Mucosa of descending colon (tissue), 3 donors: ENCODE measurements at regions of chr20 and their contacts with region 1.

Region 1: DNA sequence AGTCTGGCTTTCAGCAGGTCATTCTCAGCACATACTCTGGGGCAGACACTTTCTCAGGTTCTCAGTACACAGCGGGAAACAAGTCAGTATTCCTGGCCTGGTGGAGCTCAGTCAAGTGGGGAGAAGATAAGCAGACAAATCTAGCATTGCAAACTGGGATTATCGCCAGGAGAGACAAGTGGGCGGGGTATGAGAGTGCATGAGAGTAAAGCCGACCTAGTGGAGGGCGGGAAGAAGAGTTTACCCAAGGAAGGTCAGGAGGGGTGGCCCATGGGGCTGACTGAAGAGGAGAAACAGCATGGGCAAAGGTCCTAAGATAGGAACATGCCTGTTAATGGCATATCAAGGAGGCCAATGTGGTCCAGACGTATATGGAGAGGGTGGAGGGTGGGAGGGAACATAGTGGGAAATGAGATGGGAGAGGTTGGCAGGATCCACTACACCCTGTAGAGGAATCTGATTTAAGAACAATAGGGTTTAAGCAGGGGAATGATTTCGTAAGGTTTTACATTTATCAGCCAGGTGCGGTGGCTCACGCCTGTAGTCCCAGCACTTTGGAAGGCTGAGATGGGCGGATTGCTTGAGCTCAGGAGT is 12.4 kb upstream of the CSNK2A1 start:
- DNase-seq: peak in 1 of 3 donors; percentile 42
- ATAC-seq: peak; percentile 36
- H3K4me3 ChIP-seq: no peak overlapping the region
- H3K4me1 ChIP-seq: no peaks in the 10 kb centered on the region
- CTCF ChIP-seq: no peak

Region 2: DNA sequence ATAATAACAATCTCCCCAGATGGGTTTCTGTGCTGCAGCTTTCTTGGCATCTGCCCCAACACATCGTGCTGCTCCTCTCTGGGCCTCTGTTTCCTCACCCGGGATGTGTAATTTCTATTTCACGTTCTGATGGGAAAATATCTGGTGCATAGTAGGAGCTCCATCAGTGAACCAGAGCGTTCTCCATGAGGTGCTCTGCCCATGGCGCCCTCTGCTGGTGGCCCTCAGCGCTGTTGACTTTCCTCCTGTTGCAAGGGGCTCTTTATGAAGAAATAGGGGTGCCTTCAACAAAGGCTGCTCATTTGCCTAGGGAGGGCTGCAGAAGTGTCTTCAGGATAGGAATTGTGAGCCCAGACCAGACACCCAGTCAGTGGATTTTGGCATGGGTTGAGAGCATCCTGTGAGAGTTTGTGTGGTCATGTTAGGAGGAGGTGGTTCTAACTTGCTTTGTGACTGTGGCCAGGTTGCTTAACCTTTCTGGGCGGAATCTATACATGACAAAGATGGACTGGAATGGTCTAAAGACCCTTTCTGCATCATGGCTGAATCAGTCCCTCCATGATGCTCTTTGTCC is 111.4 kb after region 1 on chr20:
- intact Hi-C with region 1: loop called in 1 of 2 experiments (anchors 10 kb)
- DNase-seq: peak in 2 of 3 donors; percentile 64 to 78
- ATAC-seq: peak; percentile 58
- H3K4me3 ChIP-seq: no peak overlapping the region
- H3K4me1 ChIP-seq: no peaks in the 10 kb centered on the region
- CTCF ChIP-seq: peak; percentile 61